Dendritic cell treated with granulocyte-macrophage colony-stimulating factor and Interleukin-4, amounts not matched to agents 40 ng/mL and 50 ng/mL, for 4 days (primary cell): ENCODE measurements at regions of chr16 and their contacts with region 1.

Region 1: GRCh38 chr16:660459-661183 is 7.3 kb upstream of the RHOT2 start:
- H3K4me3 Mint-ChIP-seq: peak overlapping the region; percentile 63
- H3K27ac Mint-ChIP-seq: peak overlapping the region; percentile 46
- H3K4me1 Mint-ChIP-seq: peaks cover 18% of the 10 kb centered on the region
- H3K27me3 Mint-ChIP-seq: no peaks in the 10 kb centered on the region

Region 2: DNA sequence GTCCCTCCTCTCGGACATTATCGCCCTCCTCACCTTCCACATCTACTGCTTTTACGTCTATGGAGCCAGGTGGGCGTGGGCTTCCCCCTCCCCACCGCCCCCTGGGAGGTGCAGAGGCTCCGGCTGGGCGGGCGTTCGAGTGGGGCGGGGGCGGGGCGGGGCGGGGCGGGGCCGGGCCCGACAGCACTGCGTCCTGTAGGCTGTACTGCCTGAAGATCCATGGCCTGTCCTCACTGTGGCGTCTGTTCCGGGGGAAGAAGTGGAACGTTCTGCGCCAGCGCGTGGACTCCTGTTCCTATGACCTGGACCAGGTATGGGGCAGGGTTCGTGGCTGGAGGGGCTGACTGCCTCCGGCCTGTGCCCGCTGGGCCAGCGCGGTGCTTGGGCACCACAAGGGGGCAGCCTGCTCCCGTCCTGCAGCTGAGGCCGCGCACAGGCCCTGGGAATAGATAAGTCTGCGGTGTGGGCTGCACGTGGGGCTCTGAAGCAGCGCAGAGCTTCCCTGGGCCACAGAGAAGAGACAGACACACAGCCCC is 81.7 kb before region 1 on chr16:
- intact Hi-C with region 1: loop called (anchors 1 kb)
- H3K4me3 Mint-ChIP-seq: peak overlapping the region; percentile 44
- H3K27ac Mint-ChIP-seq: no peak overlapping the region
- H3K4me1 Mint-ChIP-seq: no peaks in the 10 kb centered on the region
- H3K27me3 Mint-ChIP-seq: no peaks in the 10 kb centered on the region

Region 3: GRCh38 chr16:636206-637080 is 24.2 kb before region 1 on chr16 and contains the start of gene METTL26:
- intact Hi-C with region 1: loop called (anchors 1 kb)
- H3K4me3 Mint-ChIP-seq: peak within 1 kb of the TSS; percentile 97
- H3K27ac Mint-ChIP-seq: peak within 1 kb of the TSS; percentile 94
- H3K4me1 Mint-ChIP-seq: peaks cover 30% of the 10 kb centered on the region
- H3K27me3 Mint-ChIP-seq: peaks cover 7% of the 10 kb centered on the region

Region 4: DNA sequence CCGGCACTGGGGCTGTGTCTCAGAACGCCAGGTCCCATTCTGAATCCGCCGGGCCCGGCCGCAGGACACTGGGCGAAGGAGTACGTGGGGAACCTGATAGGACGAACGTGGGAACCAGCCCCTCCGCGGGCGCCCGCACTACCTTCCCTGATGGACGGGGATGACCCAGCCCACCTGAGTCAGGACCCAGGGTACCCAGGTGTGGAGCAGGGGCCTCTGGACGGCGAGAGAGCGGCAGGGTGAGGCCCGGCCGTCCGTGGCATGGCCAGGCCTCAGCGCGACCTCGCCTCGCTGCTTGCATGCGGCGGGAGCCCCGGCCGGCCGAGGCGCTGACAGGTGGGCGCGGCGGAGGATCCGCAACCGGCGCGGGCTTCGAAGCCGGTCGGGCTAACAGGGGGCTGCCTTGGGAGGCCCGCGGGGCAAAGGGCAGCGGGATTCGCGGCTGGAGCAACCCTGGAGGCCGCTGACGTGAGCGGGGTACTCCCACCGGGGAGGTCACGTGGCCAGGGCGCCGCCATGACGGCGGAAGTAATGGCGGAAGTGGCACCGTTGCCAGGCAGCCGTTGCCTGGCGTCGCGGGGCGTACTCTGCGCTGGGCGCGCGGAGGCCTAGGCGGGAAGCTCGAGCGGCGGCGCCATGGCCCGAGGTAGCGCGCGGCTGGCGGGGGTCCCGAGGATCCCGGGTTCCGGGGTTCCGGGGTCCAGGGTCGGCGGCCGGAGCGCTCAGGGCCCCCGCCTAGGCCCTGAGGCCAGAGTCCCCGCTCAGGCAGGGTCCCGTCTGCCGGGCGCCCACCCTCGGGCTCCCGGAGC is 11.6 kb before region 1 on chr16 and contains the start of gene WDR90:
- intact Hi-C with region 1: loop called (anchors 1 kb)
- H3K4me3 Mint-ChIP-seq: peak within 1 kb of the TSS; percentile 81
- H3K27ac Mint-ChIP-seq: peak within 1 kb of the TSS; percentile 87
- H3K4me1 Mint-ChIP-seq: peaks cover 64% of the 10 kb centered on the region
- H3K27me3 Mint-ChIP-seq: no peaks in the 10 kb centered on the region

Region 5: GRCh38 chr16:1019231-1020090 is 358.8 kb after region 1 on chr16:
- intact Hi-C with region 1: no loop called
- H3K4me3 Mint-ChIP-seq: no peak overlapping the region
- H3K27ac Mint-ChIP-seq: no peak overlapping the region
- H3K4me1 Mint-ChIP-seq: no peaks in the 10 kb centered on the region
- H3K27me3 Mint-ChIP-seq: no peaks in the 10 kb centered on the region